ENCODE measurements at regions of chr14 and their contacts with region 1.

Region 1: DNA sequence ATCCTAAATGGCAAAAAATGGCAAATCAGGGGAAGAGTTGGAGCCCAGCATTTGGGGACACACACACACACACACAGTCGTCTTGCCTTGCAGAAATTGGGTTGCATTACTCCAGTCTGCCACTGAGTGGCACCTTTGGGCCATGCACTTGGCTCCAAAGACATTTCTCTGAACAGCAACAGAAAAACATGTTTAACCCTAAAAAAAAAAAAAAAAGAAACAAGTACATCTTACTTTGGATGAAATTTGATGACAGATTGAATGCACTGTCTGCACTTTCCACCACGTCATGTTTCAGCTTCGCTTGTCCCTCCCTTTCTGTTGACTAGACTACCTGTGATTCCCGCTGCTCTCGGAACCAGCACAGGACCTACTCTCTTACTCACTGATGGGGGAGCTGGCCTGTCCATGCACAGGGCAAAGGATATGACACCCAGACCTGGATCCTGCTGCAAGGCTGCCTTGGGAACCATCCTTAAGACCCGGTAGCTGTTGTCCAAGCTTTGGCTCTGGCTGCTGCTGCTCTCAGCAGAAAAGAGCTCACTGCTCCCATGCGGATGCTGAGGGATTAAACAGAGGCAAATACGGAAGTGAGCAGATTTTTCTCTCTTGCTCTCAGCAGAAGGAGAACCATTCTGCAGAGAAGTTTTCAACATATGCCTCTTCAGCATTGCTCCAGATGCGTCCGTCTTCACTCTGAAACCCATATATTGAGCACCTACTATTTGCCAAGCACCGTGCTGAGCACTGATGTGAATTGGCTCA is 376.8 kb downstream of the DPF3 start:
- DNase-seq: peak; percentile 68 to 88
- ATAC-seq: peak; percentile 53 to 61 (median 60)
- H3K4me3 ChIP-seq: no peak overlapping the region
- H3K4me3 Mint-ChIP-seq: no peak overlapping the region
- H3K27ac ChIP-seq: no peak overlapping the region
- H3K27ac Mint-ChIP-seq: no peak overlapping the region
- H3K4me1 ChIP-seq: peaks cover 51% of the 10 kb centered on the region
- H3K4me1 Mint-ChIP-seq: peaks cover 56 to 58% of the 10 kb centered on the region in 2 donors
- H3K27me3 ChIP-seq: peaks cover 2% of the 10 kb centered on the region
- H3K27me3 Mint-ChIP-seq: peaks cover 32 to 35% of the 10 kb centered on the region in 2 donors
- CTCF ChIP-seq: peak; percentile 90

Region 2: DNA sequence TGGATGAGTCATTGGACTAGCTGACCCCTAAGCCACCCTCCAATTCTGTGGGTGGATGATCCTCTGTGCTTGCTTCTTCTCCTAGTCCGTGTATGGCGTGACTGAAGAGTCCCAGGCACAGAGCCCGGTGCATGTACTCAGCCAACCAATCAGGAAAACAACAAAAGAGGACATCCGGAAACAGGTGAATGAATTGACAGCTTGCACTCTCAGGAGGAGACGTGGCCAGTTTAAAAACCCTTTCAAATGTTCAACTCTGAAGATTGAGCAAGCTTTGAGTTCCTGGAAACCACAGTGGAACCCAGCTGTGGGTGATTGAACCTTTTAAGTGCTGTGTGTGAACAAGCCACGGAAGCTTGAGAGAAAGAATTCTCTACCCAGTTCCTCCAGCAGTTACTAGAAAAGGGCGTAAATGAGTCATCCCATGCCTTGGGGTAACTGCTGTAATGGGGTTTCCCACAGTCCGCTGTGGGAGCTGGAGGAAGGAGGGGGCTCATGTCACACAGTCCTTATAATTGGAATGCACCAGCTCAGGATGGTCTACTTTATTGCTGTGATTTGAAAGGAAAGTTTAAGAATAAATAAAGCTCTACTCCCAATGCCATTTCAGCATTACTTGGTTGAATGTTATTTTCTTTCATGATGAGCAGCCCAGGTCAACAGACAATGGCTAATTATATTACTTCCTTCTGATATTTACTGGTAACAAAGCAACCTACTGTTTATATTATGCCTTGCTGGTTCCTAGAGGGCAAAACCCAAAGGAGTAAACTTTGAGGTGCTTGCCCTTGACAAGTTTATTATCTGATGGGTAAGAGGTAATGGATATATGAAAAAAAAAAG is 40.2 kb before region 1 on chr14:
- intact Hi-C with region 1: loop called (anchors 2 kb)
- DNase-seq: peak; percentile 46 to 66
- ATAC-seq: peak; percentile 84 to 90 (median 87)
- H3K4me3 ChIP-seq: peak overlapping the region; percentile 4
- H3K4me3 Mint-ChIP-seq: peak overlapping the region; percentile 78
- H3K27ac ChIP-seq: peak overlapping the region; percentile 65
- H3K27ac Mint-ChIP-seq: peak overlapping the region; percentile 82 to 88
- H3K4me1 ChIP-seq: peaks cover 44% of the 10 kb centered on the region
- H3K4me1 Mint-ChIP-seq: peaks cover 55 to 57% of the 10 kb centered on the region in 2 donors
- H3K27me3 ChIP-seq: no peaks in the 10 kb centered on the region
- H3K27me3 Mint-ChIP-seq: peaks cover 0 to 7% of the 10 kb centered on the region in 2 donors
- CTCF ChIP-seq: no peak

Region 3: DNA sequence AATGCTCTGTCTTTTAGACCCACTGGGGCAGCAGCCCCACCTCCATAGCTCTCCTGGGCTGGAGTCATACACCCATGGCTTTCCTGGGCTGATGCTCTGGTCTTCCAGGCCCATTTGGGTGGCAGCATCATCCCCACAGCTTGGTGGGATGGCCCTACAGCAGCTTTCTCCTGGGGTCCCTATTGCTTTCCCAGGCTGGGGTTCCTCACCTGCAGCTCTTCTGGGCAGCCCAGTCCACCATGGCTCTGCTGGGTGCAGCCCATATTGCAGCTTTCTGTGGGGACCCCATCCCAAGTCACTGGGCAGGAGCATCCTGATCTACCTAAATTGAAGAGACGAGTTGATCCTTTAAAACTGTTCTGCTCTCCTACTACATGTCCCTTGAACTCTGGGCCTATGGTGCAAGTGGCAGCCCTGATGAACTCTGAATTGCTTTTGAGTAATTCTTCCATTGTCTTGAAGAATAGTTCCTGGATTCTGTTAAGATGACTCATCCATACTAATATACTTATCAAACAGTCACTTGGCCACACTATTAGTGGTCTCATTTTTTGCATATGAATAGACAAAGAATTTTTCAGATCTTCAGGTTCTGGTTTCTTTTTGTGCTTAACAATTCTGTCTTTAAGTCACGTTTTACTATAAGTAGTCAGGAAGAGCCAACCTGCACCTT is 13.3 kb before region 1 on chr14:
- intact Hi-C with region 1: no loop called
- DNase-seq: no peak
- ATAC-seq: no peak
- H3K4me3 ChIP-seq: no peak overlapping the region
- H3K4me3 Mint-ChIP-seq: no peak overlapping the region
- H3K27ac ChIP-seq: no peak overlapping the region
- H3K27ac Mint-ChIP-seq: no peak overlapping the region
- H3K4me1 ChIP-seq: no peaks in the 10 kb centered on the region
- H3K4me1 Mint-ChIP-seq: no peaks in the 10 kb centered on the region
- H3K27me3 ChIP-seq: no peaks in the 10 kb centered on the region
- H3K27me3 Mint-ChIP-seq: peaks cover 5 to 10% of the 10 kb centered on the region in 2 donors
- CTCF ChIP-seq: no peak

Region 4: GRCh38 chr14:72594099-72594901 is 77.2 kb after region 1 on chr14:
- intact Hi-C with region 1: loop called (anchors 2 kb)
- DNase-seq: peak; percentile 44 to 74
- ATAC-seq: peak; percentile 86 to 96 (median 88)
- H3K4me3 ChIP-seq: no peak overlapping the region
- H3K4me3 Mint-ChIP-seq: peak overlapping the region; percentile 77
- H3K27ac ChIP-seq: no peak overlapping the region
- H3K27ac Mint-ChIP-seq: peak overlapping the region; percentile 19 to 28
- H3K4me1 ChIP-seq: peaks cover 50% of the 10 kb centered on the region
- H3K4me1 Mint-ChIP-seq: peaks cover 54 to 56% of the 10 kb centered on the region in 2 donors
- H3K27me3 ChIP-seq: peaks cover 49% of the 10 kb centered on the region
- H3K27me3 Mint-ChIP-seq: peaks cover 72% of the 10 kb centered on the region in 2 donors
- CTCF ChIP-seq: no peak

Region 5: DNA sequence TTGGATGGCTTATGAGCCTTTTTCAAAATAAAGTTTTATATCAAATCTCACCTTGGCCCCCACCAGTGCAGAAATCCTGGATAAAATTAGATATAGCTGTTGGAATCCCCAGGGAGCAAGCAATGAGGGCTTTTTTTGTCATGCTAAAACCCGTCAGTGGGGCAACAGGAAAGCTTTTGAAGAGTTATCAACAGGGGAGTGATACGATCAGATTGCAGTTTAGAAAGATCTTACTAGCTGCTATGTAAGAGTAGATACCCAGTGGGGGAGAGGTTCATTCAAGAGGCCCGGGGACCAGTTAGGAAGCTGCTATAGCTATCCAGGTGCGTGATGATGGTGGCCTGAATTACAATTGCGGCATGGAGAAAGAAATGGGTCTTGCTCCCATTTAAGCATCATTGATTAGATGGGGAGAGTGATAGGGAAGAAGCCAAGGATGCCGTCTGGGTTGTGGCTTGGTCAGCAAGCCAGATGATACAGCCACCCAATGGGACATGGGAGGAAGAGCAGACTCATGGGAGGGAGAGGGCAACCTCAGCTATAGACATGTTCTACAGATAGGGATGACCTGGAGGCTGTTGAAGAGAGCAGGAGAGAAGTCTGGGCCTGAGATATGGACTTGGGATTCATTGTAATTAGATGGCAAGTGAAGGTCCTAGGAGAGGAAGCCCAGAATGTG is 104.4 kb after region 1 on chr14:
- intact Hi-C with region 1: no loop called
- DNase-seq: peak in 1 of 2 donors; percentile 6
- ATAC-seq: no peak
- H3K4me3 ChIP-seq: no peak overlapping the region
- H3K4me3 Mint-ChIP-seq: no peak overlapping the region
- H3K27ac ChIP-seq: no peak overlapping the region
- H3K27ac Mint-ChIP-seq: no peak overlapping the region
- H3K4me1 ChIP-seq: no peaks in the 10 kb centered on the region
- H3K4me1 Mint-ChIP-seq: no peaks in the 10 kb centered on the region
- H3K27me3 ChIP-seq: peaks cover 2% of the 10 kb centered on the region
- H3K27me3 Mint-ChIP-seq: peaks cover 33 to 60% of the 10 kb centered on the region in 2 donors
- CTCF ChIP-seq: no peak

Region 6: GRCh38 chr14:72822946-72823611 is 306.0 kb after region 1 on chr14:
- intact Hi-C with region 1: no loop called
- DNase-seq: no peak
- ATAC-seq: no peak
- H3K4me3 ChIP-seq: no peak overlapping the region
- H3K4me3 Mint-ChIP-seq: no peak overlapping the region
- H3K27ac ChIP-seq: no peak overlapping the region
- H3K27ac Mint-ChIP-seq: no peak overlapping the region
- H3K4me1 ChIP-seq: no peaks in the 10 kb centered on the region
- H3K4me1 Mint-ChIP-seq: no peaks in the 10 kb centered on the region
- H3K27me3 ChIP-seq: no peaks in the 10 kb centered on the region
- H3K27me3 Mint-ChIP-seq: peaks cover 0 to 10% of the 10 kb centered on the region in 2 donors
- CTCF ChIP-seq: no peak

Region 7: DNA sequence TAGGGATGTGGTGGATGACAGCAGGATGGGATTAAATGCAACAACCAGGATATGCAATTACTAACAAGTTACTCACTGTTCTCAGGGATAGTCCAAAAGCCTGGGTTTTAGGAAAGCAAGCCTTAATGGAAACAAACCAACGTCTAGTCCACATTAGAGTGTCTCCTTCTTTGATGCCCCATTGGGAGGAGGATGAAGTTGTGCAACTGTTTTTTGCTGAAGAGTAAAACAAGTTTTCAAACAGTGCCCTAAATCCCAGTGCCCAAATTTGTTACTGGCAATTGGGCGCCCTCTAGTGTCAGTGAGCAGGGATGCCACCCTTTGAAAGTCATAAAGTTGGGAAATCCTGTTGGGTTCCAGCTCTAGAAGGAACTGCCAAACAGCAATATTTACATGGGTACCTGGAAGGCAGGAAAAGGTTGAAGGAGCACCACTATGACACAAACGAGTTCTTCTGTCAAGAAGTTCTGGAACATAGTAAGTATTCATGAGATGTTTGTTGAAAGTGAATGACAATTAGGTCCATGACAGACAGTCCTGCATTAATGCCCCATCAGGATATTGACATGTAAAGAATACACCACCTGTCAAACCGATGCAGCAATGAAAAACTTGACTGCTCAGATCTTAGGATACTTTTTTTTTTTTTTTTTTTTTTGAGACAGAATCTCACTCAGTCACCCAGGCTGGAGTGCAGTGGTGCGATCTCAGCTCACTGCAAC is 387.9 kb after region 1 on chr14:
- intact Hi-C with region 1: loop called (anchors 1 kb)
- DNase-seq: peak; percentile 38 to 86
- ATAC-seq: peak; percentile 73 to 88 (median 86)
- H3K4me3 ChIP-seq: no peak overlapping the region
- H3K4me3 Mint-ChIP-seq: no peak overlapping the region
- H3K27ac ChIP-seq: no peak overlapping the region
- H3K27ac Mint-ChIP-seq: no peak overlapping the region
- H3K4me1 ChIP-seq: no peaks in the 10 kb centered on the region
- H3K4me1 Mint-ChIP-seq: no peaks in the 10 kb centered on the region
- H3K27me3 ChIP-seq: peaks cover 2% of the 10 kb centered on the region
- H3K27me3 Mint-ChIP-seq: peaks cover 38 to 42% of the 10 kb centered on the region in 2 donors
- CTCF ChIP-seq: peak; percentile 93

Region 8: DNA sequence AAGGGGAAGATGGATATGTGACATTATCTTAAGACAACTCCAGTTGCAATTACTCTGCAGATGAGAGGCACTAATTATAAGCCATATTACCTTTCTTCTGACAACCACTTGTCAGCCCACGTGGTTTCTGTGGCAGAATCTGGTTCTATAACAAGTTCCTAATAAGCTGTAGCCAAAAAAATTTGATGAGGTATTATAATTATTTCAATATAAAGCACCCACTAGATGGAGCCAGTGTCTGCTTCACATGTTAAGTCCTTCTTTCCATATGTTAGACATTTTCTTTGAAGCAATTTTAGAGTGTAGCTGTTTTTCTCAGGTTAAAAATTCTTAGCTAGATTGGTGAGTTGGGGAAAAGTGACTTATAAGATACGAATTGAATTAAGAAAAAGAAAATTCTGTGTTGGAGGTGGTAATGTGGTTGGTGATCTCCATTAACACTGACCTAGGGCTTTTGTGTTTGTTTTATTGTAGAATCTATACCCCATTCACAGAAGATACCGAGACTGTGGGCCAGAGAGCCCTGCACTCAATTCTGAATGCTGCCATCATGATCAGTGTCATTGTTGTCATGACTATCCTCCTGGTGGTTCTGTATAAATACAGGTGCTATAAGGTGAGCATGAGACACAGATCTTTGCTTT is 656.1 kb after region 1 on chr14:
- intact Hi-C with region 1: no loop called
- DNase-seq: peak in 1 of 2 donors; percentile 56
- ATAC-seq: peak; percentile 44 to 48 (median 47)
- H3K4me3 ChIP-seq: no peak overlapping the region
- H3K4me3 Mint-ChIP-seq: no peak overlapping the region
- H3K27ac ChIP-seq: no peak overlapping the region
- H3K27ac Mint-ChIP-seq: peak overlapping the region; percentile 4 to 39
- H3K4me1 ChIP-seq: no peaks in the 10 kb centered on the region
- H3K4me1 Mint-ChIP-seq: peaks cover 7 to 9% of the 10 kb centered on the region in 2 donors
- H3K27me3 ChIP-seq: no peaks in the 10 kb centered on the region
- H3K27me3 Mint-ChIP-seq: no peaks in the 10 kb centered on the region
- CTCF ChIP-seq: no peak

Measured in natural killer cell (primary cell).